ENCODE measurements at regions of chr22 and their contacts with region 1.

Region 1: DNA sequence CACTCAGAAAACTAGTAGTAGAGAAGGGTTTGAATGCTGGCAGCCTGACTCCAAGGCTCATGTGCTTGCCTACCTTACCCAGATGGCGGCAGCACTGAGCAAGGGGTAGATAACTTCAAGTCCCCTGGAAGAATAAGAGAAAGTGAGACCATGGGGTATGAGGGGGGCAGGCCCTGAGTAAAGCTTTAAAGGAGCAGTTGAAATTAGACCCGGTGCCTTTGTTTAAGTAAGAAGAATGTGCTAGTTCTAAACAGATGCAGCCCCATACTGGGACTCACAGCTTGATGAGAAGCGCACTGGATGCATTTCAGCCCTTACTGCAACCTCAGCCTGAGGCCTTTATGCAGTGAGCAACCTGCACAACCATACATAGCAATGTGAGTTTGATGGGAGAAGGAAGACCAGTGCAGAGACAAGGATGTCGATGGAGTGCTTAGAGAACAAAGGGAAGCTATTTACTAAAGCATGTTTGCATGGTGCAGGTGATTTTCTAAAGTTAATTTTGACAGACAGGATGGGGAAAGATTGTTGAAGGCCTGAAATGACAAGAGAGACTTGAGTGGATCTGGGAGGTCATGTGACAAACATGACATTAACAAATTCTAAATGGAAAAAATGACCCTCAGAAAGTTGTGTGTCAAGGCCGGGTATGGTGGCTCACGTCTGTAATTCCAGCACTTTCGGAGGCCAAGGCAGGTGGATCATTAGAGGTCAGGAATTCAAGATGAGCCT is 27.1 kb upstream of the TMA7B start:
- DNase-seq: peak; percentile 35
- ATAC-seq: peak; percentile 81
- H3K4me3 ChIP-seq: no peak overlapping the region
- H3K27ac ChIP-seq: no peak overlapping the region
- H3K4me1 ChIP-seq: no peaks in the 10 kb centered on the region
- H3K27me3 ChIP-seq: peaks cover 87% of the 10 kb centered on the region
- CTCF ChIP-seq: peak; percentile 65 to 95 (median 89); a peak in 5 of 6 replicates
- POLR2A ChIP-seq: no peak
- RAD21 ChIP-seq: peak; percentile 63

Region 2: GRCh38 chr22:40036591-40037225 is 103.6 kb after region 1 on chr22:
- CTCF ChIA-PET with region 1: interaction called, 10 read pairs
- POLR2A ChIA-PET with region 1: no interaction called
- RAD21 ChIA-PET with region 1: no interaction called
- intact Hi-C with region 1: loop called (anchors 5 kb)
- DNase-seq: peak; percentile 62
- ATAC-seq: peak; percentile 94
- H3K4me3 ChIP-seq: no peak overlapping the region
- H3K27ac ChIP-seq: no peak overlapping the region
- H3K4me1 ChIP-seq: no peaks in the 10 kb centered on the region
- H3K27me3 ChIP-seq: no peaks in the 10 kb centered on the region
- CTCF ChIP-seq: peak; percentile 70 to 87 (median 84)
- POLR2A ChIP-seq: no peak
- RAD21 ChIP-seq: peak; percentile 93